ENCODE measurements at regions of chr5 and their contacts with region 1.

Region 1: DNA sequence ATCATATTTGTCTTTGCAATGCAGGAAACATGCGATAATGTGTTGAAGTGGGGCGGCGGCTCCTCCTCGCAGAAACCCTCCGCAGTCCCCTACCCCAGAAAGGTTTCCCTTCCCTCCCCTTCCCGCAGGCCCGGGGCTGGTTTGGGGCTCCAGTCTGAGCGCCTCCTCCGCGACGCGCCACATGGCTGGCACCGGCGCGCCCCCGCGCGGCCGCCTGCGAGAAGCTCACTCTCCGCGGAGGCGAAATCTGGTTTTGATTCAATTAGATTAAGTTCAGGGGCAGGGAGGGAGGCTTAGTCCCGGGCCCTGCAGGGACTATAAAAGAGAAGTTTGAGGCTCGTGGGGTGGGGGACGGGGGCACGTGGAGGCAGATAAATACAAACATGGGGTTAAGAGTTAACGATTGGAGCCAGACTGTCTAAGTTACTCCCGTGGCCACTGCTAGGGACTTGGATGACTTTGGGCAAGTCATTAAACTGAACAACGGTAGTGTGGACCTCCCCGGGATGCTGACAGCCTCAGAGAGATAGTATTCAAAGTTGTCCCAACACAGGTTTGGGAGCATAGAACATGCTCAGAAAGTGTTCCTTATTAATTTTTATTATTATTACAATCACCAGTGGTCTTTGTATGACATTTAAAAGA is 69.4 kb downstream of the MSX2 start:
- DNase-seq: peak; percentile 61
- ATAC-seq: peak; percentile 87
- H3K4me3 ChIP-seq: peak overlapping the region; percentile 37; the same call in 1 of the 2 replicates
- H3K27ac ChIP-seq: no peak overlapping the region
- H3K4me1 ChIP-seq: no peaks in the 10 kb centered on the region
- H3K27me3 ChIP-seq: no peaks in the 10 kb centered on the region
- CTCF ChIP-seq: peak; percentile 84

Region 2: DNA sequence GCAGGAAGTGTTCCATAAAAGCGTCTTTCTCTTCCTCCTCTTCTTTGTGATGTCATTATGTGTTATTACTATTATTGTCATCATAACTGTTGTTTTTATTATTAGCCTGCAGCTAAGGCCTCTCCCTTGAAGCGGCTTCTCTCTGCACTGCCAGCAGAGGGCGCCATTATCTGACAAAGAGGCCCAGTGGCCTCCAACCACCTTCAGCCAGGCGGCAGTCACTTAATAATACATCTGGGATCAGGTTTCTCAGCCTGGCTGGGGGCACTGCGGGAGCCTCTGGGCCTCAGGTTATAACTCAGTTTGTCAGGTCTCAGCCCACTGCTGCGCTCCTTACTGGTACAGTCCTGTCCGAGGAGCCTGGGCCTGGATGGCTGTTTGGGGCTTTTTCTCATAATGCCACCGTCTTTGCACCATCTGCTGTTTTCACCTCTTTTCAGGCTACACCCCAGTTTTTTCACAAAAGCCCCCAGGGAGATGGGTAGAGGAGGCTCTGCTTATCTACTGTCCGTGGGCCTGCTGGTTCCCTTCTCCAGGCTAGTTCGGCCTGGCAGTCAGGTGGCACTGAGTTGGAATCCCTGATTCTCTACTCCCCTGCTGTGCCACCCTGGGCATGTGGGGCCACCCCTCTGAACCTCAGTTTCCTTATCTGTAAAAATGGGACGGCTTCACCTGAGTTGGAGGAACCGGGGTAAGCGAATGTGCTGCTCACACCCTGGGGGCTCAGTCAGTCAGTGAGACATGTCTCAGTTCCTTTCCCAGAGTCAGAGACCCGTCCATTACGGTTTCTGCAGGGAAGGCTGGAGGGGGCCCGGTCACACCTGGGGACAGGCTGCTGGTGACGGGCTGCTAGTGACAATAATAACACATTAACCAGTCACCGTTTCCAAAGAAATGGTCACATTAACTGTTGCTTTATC is 466.2 kb before region 1 on chr5:
- CTCF ChIA-PET with region 1: no interaction called
- POLR2A ChIA-PET with region 1: no interaction called
- intact Hi-C with region 1: loop called (anchors 2 kb)
- DNase-seq: peak; percentile 93
- ATAC-seq: peak; percentile 89
- H3K4me3 ChIP-seq: no peak overlapping the region
- H3K27ac ChIP-seq: no peak overlapping the region
- H3K4me1 ChIP-seq: peaks cover 19% of the 10 kb centered on the region
- H3K27me3 ChIP-seq: peaks cover 18% of the 10 kb centered on the region
- CTCF ChIP-seq: peak; percentile 96

Region 3: GRCh38 chr5:174418928-174419796 is 374.6 kb before region 1 on chr5:
- CTCF ChIA-PET with region 1: interaction called, 3 read pairs
- POLR2A ChIA-PET with region 1: no interaction called
- intact Hi-C with region 1: loop called (anchors 1 kb)
- DNase-seq: peak; percentile 87
- ATAC-seq: peak; percentile 98
- H3K4me3 ChIP-seq: peak overlapping the region; percentile 65
- H3K27ac ChIP-seq: no peak overlapping the region
- H3K4me1 ChIP-seq: peaks cover 4% of the 10 kb centered on the region; the same call in 1 of the 2 replicates
- H3K27me3 ChIP-seq: no peaks in the 10 kb centered on the region
- CTCF ChIP-seq: peak; percentile 91

Region 4: DNA sequence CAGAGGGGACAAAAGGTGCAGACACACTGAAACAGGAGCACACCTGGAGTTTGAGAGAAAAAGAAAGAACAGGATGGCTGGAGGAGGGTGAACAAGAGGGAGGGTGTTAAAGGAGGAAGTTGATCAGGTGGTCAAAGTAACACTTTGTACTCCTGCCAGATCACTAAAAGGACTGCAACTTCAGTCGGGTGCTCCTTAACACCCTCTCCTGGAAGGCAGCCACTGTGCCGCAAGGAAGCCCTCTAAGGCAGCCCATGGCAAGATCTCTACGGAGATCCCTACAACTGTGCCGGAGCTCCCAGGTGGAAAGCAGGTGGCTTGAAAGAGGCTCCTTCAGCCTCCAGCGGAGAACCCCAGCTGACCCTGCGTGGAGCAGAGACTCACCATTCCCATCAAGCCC is 193.8 kb before region 1 on chr5:
- CTCF ChIA-PET with region 1: interaction called, 18 read pairs
- POLR2A ChIA-PET with region 1: no interaction called
- intact Hi-C with region 1: no loop called
- DNase-seq: no peak
- ATAC-seq: no peak
- H3K4me3 ChIP-seq: no peak overlapping the region
- H3K27ac ChIP-seq: no peak overlapping the region
- H3K4me1 ChIP-seq: no peaks in the 10 kb centered on the region
- H3K27me3 ChIP-seq: peaks cover 12% of the 10 kb centered on the region; the same call in 1 of the 2 replicates
- CTCF ChIP-seq: no peak